ENCODE measurements at regions of chr6 and their contacts with region 1.

Region 1: GRCh38 chr6:136210398-136211165 is 39.5 kb downstream of the MTFR2 start:
- DNase-seq: peak; percentile 25 to 55 (median 54)
- ATAC-seq: peak; percentile 75 to 77
- H3K4me3 ChIP-seq: no peak overlapping the region
- H3K27ac ChIP-seq: no peak overlapping the region
- H3K4me1 ChIP-seq: no peaks in the 10 kb centered on the region
- H3K27me3 ChIP-seq: no peaks in the 10 kb centered on the region

Region 2: DNA sequence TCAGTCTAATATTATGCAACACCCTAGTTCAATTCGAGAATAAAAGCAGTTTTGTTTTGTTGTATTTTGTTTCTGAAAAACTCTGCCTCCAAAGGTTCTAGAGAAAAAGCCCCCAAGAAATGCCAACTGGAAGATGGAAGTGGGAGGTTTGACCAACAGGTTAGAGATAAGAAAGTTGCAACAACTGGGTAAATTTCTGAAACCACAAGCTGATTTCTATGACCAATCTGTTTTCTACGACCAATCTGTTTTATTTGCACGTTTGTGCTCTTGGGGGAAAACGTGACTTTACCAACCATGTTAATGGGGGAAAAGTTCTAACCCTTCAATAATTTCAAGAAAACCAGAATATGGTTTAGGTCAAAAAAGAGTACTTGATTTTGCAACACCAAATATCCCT is 185.9 kb before region 1 on chr6:
- intact Hi-C with region 1: loop called in 1 of 4 experiments (anchors 10 kb)
- DNase-seq: no peak
- ATAC-seq: no peak
- H3K4me3 ChIP-seq: no peak overlapping the region
- H3K27ac ChIP-seq: no peak overlapping the region
- H3K4me1 ChIP-seq: no peaks in the 10 kb centered on the region
- H3K27me3 ChIP-seq: no peaks in the 10 kb centered on the region

Region 3: GRCh38 chr6:136317021-136317694 is 106.6 kb after region 1 on chr6:
- intact Hi-C with region 1: no loop called
- DNase-seq: peak in 1 of 3 donors; percentile 36
- ATAC-seq: peak; percentile 71 to 78
- H3K4me3 ChIP-seq: no peak overlapping the region
- H3K27ac ChIP-seq: no peak overlapping the region
- H3K4me1 ChIP-seq: no peaks in the 10 kb centered on the region
- H3K27me3 ChIP-seq: no peaks in the 10 kb centered on the region

Measured in right cardiac atrium (tissue), 5 donors.